T-cell (primary cell): ENCODE measurements at regions of chr11 and their contacts with region 1.

Region 1: DNA sequence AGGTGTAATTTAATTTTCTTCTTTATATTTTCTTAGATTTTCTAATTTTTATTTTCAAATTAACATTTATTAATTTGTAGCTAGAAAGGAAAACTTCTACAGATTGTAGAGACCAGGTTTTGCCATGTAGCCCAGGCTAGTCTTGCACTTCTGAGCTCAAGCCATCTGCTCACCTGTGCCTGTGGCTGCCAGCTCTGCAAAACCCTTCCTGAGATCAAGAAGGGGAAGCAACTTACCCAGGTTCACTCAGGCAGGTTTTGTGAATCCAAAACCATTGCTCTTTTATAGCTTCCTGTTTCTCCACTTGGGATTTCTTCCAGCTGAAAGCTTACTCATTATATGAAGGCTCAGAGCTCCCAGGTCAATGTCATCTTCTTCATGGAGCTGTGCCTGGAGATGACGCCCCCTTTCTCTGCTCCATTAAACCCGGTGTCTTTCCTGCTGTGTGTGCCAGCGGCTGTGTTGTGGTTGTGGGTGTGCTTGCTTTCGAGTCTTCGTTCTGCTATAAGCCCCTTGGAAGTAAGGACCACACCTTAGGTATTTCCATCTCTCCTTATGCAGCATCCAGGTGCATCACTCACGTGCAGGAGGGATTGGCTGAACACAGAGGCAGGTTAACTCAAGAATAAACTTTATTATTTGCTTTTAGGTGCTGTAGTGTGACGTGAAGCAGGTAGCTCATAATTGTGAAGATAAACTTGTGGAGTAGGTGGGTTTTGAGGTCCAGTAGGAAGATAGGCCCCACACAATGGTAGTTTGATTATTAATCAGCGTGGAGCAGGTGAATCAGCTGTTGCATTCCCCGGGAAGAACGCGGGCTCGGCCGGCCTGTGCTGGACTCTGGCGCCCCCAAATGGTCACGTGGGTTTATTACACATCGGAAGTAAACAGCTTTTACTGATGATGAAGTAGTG is 42.2 kb upstream of the INCENP start:
- DNase-seq: peak; percentile 52 to 85 (median 73)
- ATAC-seq: peak; percentile 69 to 89 (median 84)
- H3K4me3 ChIP-seq: no peak overlapping the region
- H3K4me3 Mint-ChIP-seq: peak overlapping the region in 2 of 3 donors; percentile 11 to 51
- H3K27ac ChIP-seq: no peak overlapping the region
- H3K27ac Mint-ChIP-seq: no peak overlapping the region
- H3K4me1 ChIP-seq: peaks cover 0 to 6% of the 10 kb centered on the region in 2 experiments
- H3K4me1 Mint-ChIP-seq: peaks cover 0 to 9% (median 8%) of the 10 kb centered on the region in 3 donors
- H3K27me3 ChIP-seq: peaks cover 0 to 8% of the 10 kb centered on the region in 2 experiments
- H3K27me3 Mint-ChIP-seq: peaks cover 0 to 4% of the 10 kb centered on the region in 2 donors

Region 2: DNA sequence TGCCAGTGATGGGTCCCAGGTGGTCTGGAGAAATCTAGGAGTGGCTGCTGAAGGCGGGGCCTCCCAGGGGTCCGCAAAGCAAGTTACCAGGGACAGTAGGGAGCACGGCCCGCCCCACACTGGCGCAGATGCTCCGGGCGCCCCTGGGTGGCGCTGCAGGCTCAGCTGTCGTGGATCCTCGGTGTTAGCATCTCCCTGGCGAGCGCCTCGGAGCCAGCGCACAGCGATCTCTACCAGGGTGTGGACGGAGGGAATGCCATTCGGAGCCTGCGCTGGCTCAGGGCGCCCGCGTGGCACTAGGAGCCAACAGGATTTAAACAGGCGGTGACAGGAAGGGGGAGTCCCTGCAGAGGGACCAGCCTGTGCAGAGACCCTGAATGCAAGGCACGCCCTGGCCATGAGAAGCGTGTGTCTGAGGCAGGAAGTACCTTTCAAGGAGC is 210.5 kb before region 1 on chr11:
- CTCF ChIA-PET with region 1: interaction called in 1 of 2 experiments, 11 read pairs
- POLR2A ChIA-PET with region 1: interaction called in 1 of 2 experiments, 3 read pairs
- DNase-seq: peak; percentile 16 to 76 (median 56)
- ATAC-seq: peak; percentile 85 to 98 (median 88)
- H3K4me3 ChIP-seq: peak overlapping the region in 1 of 2 donors; percentile 52
- H3K4me3 Mint-ChIP-seq: peak overlapping the region; percentile 52 to 67 (median 62)
- H3K27ac ChIP-seq: no peak overlapping the region
- H3K27ac Mint-ChIP-seq: no peak overlapping the region
- H3K4me1 ChIP-seq: peaks cover 0 to 7% of the 10 kb centered on the region in 2 experiments
- H3K4me1 Mint-ChIP-seq: peaks cover 6 to 8% (median 7%) of the 10 kb centered on the region in 3 donors
- H3K27me3 ChIP-seq: peaks cover 0 to 24% of the 10 kb centered on the region in 2 experiments
- H3K27me3 Mint-ChIP-seq: peaks cover 0 to 7% of the 10 kb centered on the region in 2 donors

Region 3: DNA sequence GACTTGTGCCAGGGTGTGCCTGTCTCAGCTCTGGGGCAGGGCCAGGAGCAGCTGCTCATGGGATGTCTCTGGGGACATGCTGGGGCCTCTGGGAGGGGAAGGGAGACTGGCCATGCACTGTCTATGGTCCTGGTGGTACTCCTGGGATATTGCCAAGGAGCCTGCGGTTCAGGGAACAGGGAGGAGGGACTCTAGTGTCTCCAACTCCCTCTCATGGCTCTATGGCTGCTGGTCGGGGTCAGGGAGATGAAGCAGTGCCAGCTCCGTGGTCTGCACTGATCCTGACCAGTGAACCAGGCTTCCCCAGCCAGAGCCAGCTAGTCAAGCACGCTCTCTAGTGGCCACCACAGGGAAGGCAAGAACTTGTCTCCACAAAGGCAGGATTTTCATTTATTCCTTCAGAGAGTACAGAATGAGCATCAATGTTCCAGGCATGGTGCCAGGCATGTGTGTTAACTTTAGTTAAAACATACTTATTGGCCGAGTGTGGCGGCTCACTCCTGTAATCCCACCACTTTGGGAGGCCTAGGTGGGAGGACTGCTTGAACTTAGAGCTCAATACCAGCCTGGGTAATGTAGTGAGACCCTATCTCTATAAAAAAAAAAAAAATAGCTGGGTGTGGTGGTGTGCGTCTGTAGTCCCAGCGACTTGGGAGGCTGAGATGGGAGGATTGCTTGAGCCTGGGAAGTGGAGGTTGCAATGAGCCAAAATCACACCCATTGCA is 134.0 kb before region 1 on chr11:
- CTCF ChIA-PET with region 1: interaction called, 20 to 64 read pairs
- POLR2A ChIA-PET with region 1: interaction called in 1 of 2 experiments, 3 read pairs
- DNase-seq: peak in 32 of 35 experiments; percentile 25 to 78 (median 58)
- ATAC-seq: peak; percentile 45 to 76 (median 67)
- H3K4me3 ChIP-seq: no peak overlapping the region
- H3K4me3 Mint-ChIP-seq: no peak overlapping the region
- H3K27ac ChIP-seq: no peak overlapping the region
- H3K27ac Mint-ChIP-seq: no peak overlapping the region
- H3K4me1 ChIP-seq: peaks cover 0 to 6% of the 10 kb centered on the region in 2 experiments
- H3K4me1 Mint-ChIP-seq: no peaks in the 10 kb centered on the region
- H3K27me3 ChIP-seq: peaks cover 0 to 41% of the 10 kb centered on the region in 2 experiments
- H3K27me3 Mint-ChIP-seq: peaks cover 0 to 4% of the 10 kb centered on the region in 2 donors

Region 4: GRCh38 chr11:62025487-62026105 is 56.0 kb before region 1 on chr11:
- CTCF ChIA-PET with region 1: interaction called in 1 of 2 experiments, 25 read pairs
- POLR2A ChIA-PET with region 1: interaction called in 1 of 2 experiments, 7 read pairs
- DNase-seq: peak; percentile 48 to 96 (median 87)
- ATAC-seq: peak; percentile 87 to 94 (median 92)
- H3K4me3 ChIP-seq: peak overlapping the region; percentile 14 to 47
- H3K4me3 Mint-ChIP-seq: peak overlapping the region; percentile 66 to 72 (median 70)
- H3K27ac ChIP-seq: peak overlapping the region; percentile 98
- H3K27ac Mint-ChIP-seq: peak overlapping the region; percentile 95 to 99
- H3K4me1 ChIP-seq: peaks cover 10 to 21% of the 10 kb centered on the region in 2 experiments
- H3K4me1 Mint-ChIP-seq: peaks cover 16 to 32% (median 22%) of the 10 kb centered on the region in 3 donors
- H3K27me3 ChIP-seq: no peaks in the 10 kb centered on the region
- H3K27me3 Mint-ChIP-seq: no peaks in the 10 kb centered on the region

Region 5: GRCh38 chr11:62108017-62108750 is 26.5 kb after region 1 on chr11:
- CTCF ChIA-PET with region 1: interaction called, 3 to 28 read pairs
- POLR2A ChIA-PET with region 1: interaction called in 1 of 2 experiments, 3 read pairs
- DNase-seq: peak in 25 of 35 experiments; percentile 13 to 81 (median 29)
- ATAC-seq: peak; percentile 28 to 56 (median 46)
- H3K4me3 ChIP-seq: no peak overlapping the region
- H3K4me3 Mint-ChIP-seq: no peak overlapping the region
- H3K27ac ChIP-seq: no peak overlapping the region
- H3K27ac Mint-ChIP-seq: no peak overlapping the region
- H3K4me1 ChIP-seq: peaks cover 2 to 25% of the 10 kb centered on the region in 2 experiments
- H3K4me1 Mint-ChIP-seq: peaks cover 13 to 19% (median 16%) of the 10 kb centered on the region in 3 donors
- H3K27me3 ChIP-seq: peaks cover 0 to 4% of the 10 kb centered on the region in 2 experiments
- H3K27me3 Mint-ChIP-seq: no peaks in the 10 kb centered on the region